ENCODE measurements at regions of chr2 and their contacts with region 1.

Region 1: DNA sequence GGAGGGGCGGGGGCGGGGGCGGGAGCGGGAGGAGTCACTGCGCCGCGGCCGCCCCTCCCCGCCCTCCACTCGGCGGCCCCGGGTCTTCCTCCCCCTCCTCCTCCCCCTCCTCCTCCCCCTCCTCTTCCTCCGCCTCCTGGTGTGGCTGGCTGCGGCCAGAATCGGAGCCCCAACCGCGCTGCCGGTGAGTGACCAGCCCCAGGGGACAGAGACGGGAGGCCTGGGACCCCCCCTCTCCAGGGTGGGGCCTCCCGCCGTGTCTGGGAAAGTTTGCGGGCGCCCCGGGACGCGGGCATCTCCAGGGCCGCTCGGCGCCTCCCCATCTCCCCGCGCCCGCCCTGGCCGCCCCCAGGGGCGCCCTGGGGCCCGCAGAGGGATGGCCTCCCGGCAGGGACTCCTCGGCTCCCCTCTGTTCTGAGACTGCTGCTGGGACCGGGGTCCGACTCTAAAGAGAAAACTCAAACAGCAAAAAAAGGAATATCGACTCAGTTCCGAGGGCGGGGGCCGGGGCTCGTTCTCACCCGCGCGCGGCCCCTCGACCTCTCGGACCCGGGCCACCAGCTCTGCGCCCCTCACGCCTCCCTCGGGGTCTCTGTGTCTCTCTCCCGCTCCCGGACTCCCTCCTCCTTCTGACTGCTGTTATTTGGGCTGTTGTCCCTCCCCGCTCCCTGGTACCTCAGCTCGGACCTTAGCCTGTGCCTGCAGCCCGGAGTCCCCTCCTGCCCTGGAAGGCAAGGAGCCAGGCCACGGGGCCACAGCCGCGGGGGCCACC is at the start of gene STON1:
- DNase-seq: peak; percentile 39
- H3K4me3 ChIP-seq: peak within 1 kb of the TSS; percentile 63 to 83 (median 64)
- H3K27ac ChIP-seq: peak within 1 kb of the TSS; percentile 84 to 96 (median 88)
- H3K4me1 ChIP-seq: peaks cover 4 to 24% (median 19%) of the 10 kb centered on the region in 4 donors
- H3K27me3 ChIP-seq: peaks cover 11% of the 10 kb centered on the region
- CTCF ChIP-seq: peak in 1 of 5 experiments; percentile 13
- EP300 ChIP-seq: no peak
- POLR2A ChIP-seq: no peak
- total RNA-seq, gene STON1: 21.4 to 39.2 (median 27.1) TPM

Region 2: DNA sequence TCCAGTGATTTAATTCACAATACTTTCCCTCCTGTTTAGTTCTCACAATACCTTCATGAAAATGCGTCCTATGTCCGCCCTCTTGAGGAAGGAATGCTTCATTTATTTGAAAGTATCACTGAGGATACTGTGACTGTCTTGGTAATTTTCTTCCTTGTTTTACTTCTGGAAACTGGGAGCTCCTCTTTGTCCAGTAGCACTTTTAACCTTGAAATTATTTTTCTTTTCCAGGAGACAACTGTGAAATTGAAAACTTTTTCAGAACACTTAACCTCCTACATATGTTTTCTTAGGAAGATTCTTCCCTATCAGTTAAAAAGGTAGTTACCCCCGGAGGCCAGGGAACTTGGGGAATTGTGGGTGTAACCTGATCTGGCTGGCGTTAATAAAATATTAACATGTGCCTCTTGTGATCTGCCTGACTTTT is 59.2 kb before region 1 on chr2:
- in situ Hi-C with region 1: no loop called
- intact Hi-C with region 1: loop called (anchors 5 kb)
- DNase-seq: no peak
- H3K4me3 ChIP-seq: no peak overlapping the region
- H3K27ac ChIP-seq: peak overlapping the region; percentile 8 to 84 (median 22)
- H3K4me1 ChIP-seq: peaks cover 0 to 8% (median 2%) of the 10 kb centered on the region in 4 donors
- H3K27me3 ChIP-seq: no peaks in the 10 kb centered on the region
- CTCF ChIP-seq: peak; percentile 42 to 65 (median 55)
- EP300 ChIP-seq: no peak
- POLR2A ChIP-seq: no peak

Region 3: GRCh38 chr2:48560546-48561209 is 30.5 kb after region 1 on chr2:
- in situ Hi-C with region 1: no loop called
- intact Hi-C with region 1: no loop called
- DNase-seq: no peak
- H3K4me3 ChIP-seq: no peak overlapping the region
- H3K27ac ChIP-seq: no peak overlapping the region
- H3K4me1 ChIP-seq: peaks cover 0 to 4% (median 0%) of the 10 kb centered on the region in 4 donors
- H3K27me3 ChIP-seq: no peaks in the 10 kb centered on the region
- CTCF ChIP-seq: no peak
- EP300 ChIP-seq: no peak
- POLR2A ChIP-seq: no peak

Region 4: GRCh38 chr2:48600204-48600813 is 70.1 kb after region 1 on chr2:
- in situ Hi-C with region 1: no loop called
- intact Hi-C with region 1: no loop called
- DNase-seq: no peak
- H3K4me3 ChIP-seq: no peak overlapping the region
- H3K27ac ChIP-seq: no peak overlapping the region
- H3K4me1 ChIP-seq: no peaks in the 10 kb centered on the region
- H3K27me3 ChIP-seq: no peaks in the 10 kb centered on the region
- CTCF ChIP-seq: peak; percentile 35 to 65 (median 54)
- EP300 ChIP-seq: no peak
- POLR2A ChIP-seq: no peak

Measured in transverse colon (tissue), 4 donors.